CD8-positive, alpha-beta T cell (primary cell): ENCODE measurements at regions of chr14 and their contacts with region 1.

Region 1: DNA sequence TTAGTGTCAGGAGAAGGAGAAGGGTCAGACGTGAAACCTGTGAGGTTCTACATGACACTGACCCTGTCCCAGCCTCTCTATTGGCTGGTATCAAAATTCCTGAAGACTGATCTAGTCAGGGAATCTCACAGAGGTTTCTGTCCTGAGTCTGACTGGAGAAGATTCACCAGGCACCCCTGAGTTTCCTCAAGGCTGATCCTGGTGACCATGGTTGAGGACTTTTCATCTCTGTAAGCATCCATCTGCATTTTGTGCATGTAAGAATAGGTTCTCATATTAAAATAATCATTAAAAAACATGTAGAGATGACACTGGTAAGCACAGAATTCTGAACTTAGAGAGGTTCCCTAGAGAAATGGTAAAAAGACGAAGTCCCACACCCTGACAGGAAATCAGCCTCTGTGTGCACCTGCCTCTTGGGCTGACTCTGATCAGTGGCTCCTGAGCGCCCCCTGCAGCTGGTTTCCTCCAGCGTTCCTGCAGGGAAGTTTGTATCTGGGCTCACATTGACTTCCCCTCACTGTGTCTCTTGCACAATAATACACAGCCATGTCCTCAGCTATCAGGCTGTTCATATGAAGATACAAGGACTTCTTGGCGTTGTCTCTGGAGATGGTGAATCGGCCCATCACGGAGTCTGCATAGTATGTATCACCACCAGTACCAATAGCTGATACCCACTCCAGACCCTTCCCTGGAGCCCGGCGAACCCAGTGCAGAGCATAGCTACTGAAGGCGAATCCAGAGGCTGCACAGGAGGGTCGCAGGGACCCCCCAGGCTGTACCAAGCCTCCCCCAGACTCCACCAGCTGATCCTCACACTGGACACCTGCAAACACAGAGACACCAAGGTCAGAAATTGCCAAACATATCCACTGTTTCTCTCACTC is 991.9 kb downstream of the TMEM121 start:
- DNase-seq: peak; percentile 79 to 93 (median 87)
- ATAC-seq: peak; percentile 91
- H3K4me3 ChIP-seq: no peak overlapping the region
- H3K4me3 Mint-ChIP-seq: no peak overlapping the region
- H3K27ac ChIP-seq: no peak overlapping the region
- H3K27ac Mint-ChIP-seq: no peak overlapping the region
- H3K4me1 ChIP-seq: peaks cover 8% of the 10 kb centered on the region
- H3K4me1 Mint-ChIP-seq: peaks cover 25% of the 10 kb centered on the region
- H3K27me3 ChIP-seq: no peaks in the 10 kb centered on the region
- H3K27me3 Mint-ChIP-seq: peaks cover 3% of the 10 kb centered on the region
- CTCF ChIP-seq: peak; percentile 90

Region 2: DNA sequence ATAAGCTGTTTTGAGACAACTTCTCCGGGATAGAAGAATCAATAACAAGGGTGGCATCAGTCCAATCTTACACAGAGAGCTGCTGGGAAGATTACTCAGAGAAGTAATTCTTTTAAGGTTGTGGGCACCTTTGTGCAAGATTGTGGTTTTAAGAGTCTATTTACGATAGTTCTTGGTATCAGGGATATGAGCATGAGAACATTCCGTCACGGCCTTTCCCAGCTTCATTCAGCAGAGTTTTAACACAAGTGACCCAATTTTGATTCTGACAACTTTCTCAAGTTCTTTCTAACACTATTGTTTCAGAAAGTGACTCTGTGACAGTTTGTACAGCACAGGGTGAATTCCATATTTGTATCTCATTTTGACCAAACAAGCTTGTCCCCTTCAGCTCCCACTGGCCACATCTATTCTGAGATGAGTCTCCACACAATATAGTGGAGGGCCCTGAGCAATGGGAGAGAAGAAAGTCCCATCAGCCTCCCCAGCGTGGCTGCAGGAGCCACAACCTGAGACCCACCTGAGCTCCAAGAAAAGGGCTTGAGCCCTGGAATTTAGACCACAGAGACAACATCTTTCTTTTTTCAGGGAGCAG is 122.7 kb before region 1 on chr14:
- CTCF ChIA-PET with region 1: no interaction called
- POLR2A ChIA-PET with region 1: no interaction called
- intact Hi-C with region 1: loop called in 1 of 2 experiments (anchors 10 kb)
- DNase-seq: peak in 2 of 9 experiments; percentile 37 to 59
- ATAC-seq: peak; percentile 56
- H3K4me3 ChIP-seq: no peak overlapping the region
- H3K4me3 Mint-ChIP-seq: peak overlapping the region; percentile 12
- H3K27ac ChIP-seq: no peak overlapping the region
- H3K27ac Mint-ChIP-seq: peak overlapping the region; percentile 25
- H3K4me1 ChIP-seq: peaks cover 15% of the 10 kb centered on the region
- H3K4me1 Mint-ChIP-seq: peaks cover 47% of the 10 kb centered on the region
- H3K27me3 ChIP-seq: peaks cover 0 to 1% of the 10 kb centered on the region in 2 experiments
- H3K27me3 Mint-ChIP-seq: peaks cover 10% of the 10 kb centered on the region
- CTCF ChIP-seq: no peak

Region 3: DNA sequence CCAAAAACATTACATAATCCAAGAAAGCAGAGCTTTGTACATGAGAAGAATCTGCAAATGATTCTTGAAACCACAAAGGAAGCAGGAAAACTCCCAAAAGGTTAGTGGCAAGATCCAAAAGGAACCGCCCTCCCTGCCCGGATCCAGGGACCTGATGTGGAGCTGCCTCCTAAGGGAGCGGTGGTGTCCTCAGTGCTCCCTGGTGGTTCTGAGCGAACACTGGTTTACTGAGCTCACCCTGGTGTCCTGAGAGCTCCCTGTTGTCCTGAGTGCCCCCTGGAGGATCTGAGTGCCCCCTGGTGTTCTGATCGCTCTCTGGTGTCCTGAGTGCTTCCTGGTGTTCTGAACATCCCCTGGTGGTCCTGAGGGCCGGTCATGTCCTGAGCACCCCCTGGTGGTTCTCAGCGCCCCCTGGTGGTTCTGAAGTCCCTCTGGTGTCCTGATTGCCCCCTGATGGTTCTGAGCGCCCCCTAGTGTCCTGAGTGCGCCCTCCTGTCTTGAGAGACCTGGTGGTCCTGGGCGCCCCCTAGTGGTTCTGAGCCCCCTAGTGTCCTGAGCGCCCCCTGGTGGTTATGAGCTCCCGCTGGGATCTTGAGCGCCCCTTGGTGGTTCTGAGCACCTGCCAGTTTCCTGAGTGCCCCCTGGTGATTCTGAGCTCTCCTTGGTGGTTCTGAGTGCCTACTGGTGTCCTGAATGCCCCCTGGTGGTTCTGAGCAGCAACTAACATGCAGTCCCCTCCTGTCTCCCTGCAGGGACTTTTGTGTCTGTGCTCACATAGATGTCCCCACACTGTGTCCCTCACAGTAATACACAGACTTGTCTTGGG is 100.9 kb before region 1 on chr14:
- CTCF ChIA-PET with region 1: interaction called, 10 read pairs
- POLR2A ChIA-PET with region 1: no interaction called
- intact Hi-C with region 1: no loop called
- DNase-seq: peak; percentile 45 to 92 (median 76)
- ATAC-seq: peak; percentile 87
- H3K4me3 ChIP-seq: no peak overlapping the region
- H3K4me3 Mint-ChIP-seq: no peak overlapping the region
- H3K27ac ChIP-seq: no peak overlapping the region
- H3K27ac Mint-ChIP-seq: no peak overlapping the region
- H3K4me1 ChIP-seq: peaks cover 3% of the 10 kb centered on the region
- H3K4me1 Mint-ChIP-seq: peaks cover 4% of the 10 kb centered on the region
- H3K27me3 ChIP-seq: peaks cover 0 to 3% of the 10 kb centered on the region in 2 experiments
- H3K27me3 Mint-ChIP-seq: no peaks in the 10 kb centered on the region
- CTCF ChIP-seq: peak; percentile 97

Region 4: GRCh38 chr14:106460916-106461315 is 57.4 kb before region 1 on chr14:
- CTCF ChIA-PET with region 1: interaction called, 29 read pairs
- POLR2A ChIA-PET with region 1: no interaction called
- intact Hi-C with region 1: no loop called
- DNase-seq: no peak
- ATAC-seq: no peak
- H3K4me3 ChIP-seq: no peak overlapping the region
- H3K4me3 Mint-ChIP-seq: no peak overlapping the region
- H3K27ac ChIP-seq: no peak overlapping the region
- H3K27ac Mint-ChIP-seq: no peak overlapping the region
- H3K4me1 ChIP-seq: no peaks in the 10 kb centered on the region
- H3K4me1 Mint-ChIP-seq: no peaks in the 10 kb centered on the region
- H3K27me3 ChIP-seq: no peaks in the 10 kb centered on the region
- H3K27me3 Mint-ChIP-seq: no peaks in the 10 kb centered on the region
- CTCF ChIP-seq: no peak

Region 5: DNA sequence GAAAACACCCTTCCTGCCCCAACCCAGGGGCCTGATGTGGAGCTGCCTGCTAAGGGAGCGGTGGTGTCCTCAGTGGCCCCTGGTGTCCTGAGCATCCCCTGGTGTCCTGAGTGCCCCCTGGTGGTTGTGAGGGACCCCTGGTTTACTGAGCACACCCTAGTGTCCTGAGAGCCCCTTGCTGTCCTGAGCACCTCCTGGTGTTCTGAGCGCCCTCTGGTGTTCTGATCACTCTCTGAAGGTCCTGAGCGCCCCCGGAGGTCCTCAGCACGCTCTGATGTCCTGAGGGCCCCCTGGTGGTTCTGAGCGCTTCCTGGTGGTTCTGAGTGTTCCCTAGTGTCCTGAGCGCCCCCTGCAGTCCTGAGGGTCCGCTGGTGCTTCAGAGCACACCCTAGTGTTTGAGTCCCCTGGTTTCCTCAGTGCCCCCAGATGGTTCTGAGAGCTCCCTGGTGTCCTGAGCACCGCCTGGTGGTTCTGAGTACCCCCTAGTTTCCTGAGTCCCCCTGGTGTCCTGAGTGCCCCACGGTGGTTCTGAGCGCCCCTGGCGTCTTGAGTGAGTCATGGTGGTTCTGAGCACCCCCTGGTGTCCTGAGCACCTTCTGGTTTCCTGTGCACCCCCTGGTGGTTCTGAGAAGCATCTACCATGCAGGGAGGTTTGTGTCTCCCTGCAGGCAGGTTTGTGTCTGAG is 12.3 kb after region 1 on chr14:
- CTCF ChIA-PET with region 1: interaction called, 25 read pairs
- POLR2A ChIA-PET with region 1: interaction called, 4 read pairs
- intact Hi-C with region 1: no loop called
- DNase-seq: peak in 6 of 9 experiments; percentile 33 to 72 (median 62)
- ATAC-seq: peak; percentile 95
- H3K4me3 ChIP-seq: no peak overlapping the region
- H3K4me3 Mint-ChIP-seq: no peak overlapping the region
- H3K27ac ChIP-seq: no peak overlapping the region
- H3K27ac Mint-ChIP-seq: no peak overlapping the region
- H3K4me1 ChIP-seq: no peaks in the 10 kb centered on the region
- H3K4me1 Mint-ChIP-seq: peaks cover 3% of the 10 kb centered on the region
- H3K27me3 ChIP-seq: no peaks in the 10 kb centered on the region
- H3K27me3 Mint-ChIP-seq: peaks cover 13% of the 10 kb centered on the region
- CTCF ChIP-seq: peak; percentile 53